ENCODE measurements at regions of chr6 and their contacts with region 1.

Region 1: GRCh38 chr6:3281631-3282475 is 23.1 kb downstream of the PSMG4 start:
- DNase-seq: peak in 3 of 5 donors; percentile 26 to 68 (median 49)
- H3K4me3 ChIP-seq: no peak overlapping the region
- H3K27ac ChIP-seq: peak overlapping the region; percentile 49 to 50
- H3K4me1 ChIP-seq: peaks cover 0 to 7% (median 0%) of the 10 kb centered on the region in 3 donors
- H3K27me3 ChIP-seq: no peaks in the 10 kb centered on the region
- CTCF ChIP-seq: no peak

Region 2: DNA sequence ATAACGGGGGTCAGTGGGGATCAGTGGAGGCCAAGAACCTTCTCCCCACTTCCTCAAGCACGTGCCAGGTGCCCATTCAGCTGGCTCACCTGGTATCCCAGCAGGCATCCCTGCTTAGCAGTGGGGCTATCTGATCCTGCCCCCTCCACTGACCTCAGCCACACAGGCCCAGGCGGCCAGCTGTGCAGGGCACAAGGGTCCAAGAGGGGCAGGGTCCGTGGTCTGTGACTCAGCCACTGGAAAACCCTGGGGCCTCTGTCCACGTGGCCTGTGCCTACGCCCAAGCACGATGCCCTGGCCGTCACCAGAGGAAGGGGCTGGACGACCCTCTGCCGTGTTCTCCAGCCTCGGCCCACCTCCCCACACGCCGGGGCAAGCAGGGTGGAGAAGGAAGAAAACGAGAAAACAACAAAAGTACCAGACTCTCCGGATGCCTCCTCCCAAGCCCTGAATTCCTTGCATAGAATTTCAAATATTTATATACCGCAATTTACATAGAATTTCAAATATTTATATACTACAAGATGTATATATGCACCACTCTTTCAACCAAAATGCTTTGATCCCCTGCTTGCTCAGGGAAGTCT is 457.6 kb after region 1 on chr6:
- intact Hi-C with region 1: loop called (anchors 5 kb)
- DNase-seq: peak in 2 of 5 donors; percentile 27 to 59
- H3K4me3 ChIP-seq: no peak overlapping the region
- H3K27ac ChIP-seq: no peak overlapping the region
- H3K4me1 ChIP-seq: peaks cover 0 to 13% (median 10%) of the 10 kb centered on the region in 3 donors
- H3K27me3 ChIP-seq: no peaks in the 10 kb centered on the region
- CTCF ChIP-seq: no peak